T-cell (primary cell): ENCODE measurements at regions of chr19 and their contacts with region 1.

Region 1: GRCh38 chr19:16382775-16383543 is 58.3 kb downstream of the KLF2 start:
- DNase-seq: peak; percentile 59 to 90 (median 78)
- ATAC-seq: peak; percentile 69 to 80 (median 72)
- H3K4me3 ChIP-seq: peak overlapping the region in 1 of 2 donors; percentile 26
- H3K4me3 Mint-ChIP-seq: peak overlapping the region; percentile 58 to 69 (median 64)
- H3K27ac ChIP-seq: peak overlapping the region; percentile 69
- H3K27ac Mint-ChIP-seq: peak overlapping the region; percentile 92 to 95
- H3K4me1 ChIP-seq: peaks cover 26 to 79% of the 10 kb centered on the region in 2 experiments
- H3K4me1 Mint-ChIP-seq: peaks cover 64 to 66% (median 65%) of the 10 kb centered on the region in 3 donors
- H3K27me3 ChIP-seq: no peaks in the 10 kb centered on the region
- H3K27me3 Mint-ChIP-seq: no peaks in the 10 kb centered on the region

Region 2: DNA sequence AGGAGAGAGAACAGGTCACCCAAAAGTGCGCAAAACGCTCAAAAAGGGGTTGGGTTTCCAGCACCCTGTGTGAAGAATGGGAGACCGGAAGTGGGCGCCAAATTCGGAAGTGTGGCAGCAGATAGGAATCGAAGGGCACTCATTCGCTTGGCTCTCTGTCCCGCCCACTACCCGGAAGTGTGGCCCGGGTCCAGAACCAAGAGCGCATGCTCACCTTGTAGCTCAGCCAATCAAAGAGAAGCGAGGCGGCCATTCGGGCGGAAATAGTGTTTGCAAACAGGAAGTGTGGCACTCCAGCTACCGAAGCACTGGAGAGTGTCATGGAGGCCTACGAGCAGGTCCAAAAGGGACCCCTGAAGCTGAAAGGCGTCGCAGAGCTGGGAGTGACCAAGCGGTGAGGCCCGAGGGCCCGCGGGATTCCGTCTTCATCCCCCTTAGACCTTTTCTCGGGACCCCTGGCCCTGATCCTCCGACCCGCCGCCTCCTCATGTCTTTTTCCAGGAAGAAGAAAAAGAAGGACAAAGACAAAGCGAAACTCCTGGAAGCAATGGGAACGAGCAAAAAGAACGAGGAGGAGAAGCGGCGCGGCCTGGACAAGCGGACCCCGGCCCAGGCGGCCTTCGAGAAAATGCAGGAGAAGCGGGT is 197.7 kb before region 1 on chr19 and contains the start of gene FAM32A:
- CTCF ChIA-PET with region 1: interaction called in 1 of 2 experiments, 13 read pairs
- POLR2A ChIA-PET with region 1: no interaction called
- DNase-seq: peak; percentile 96 to 100 (median 98)
- ATAC-seq: peak; percentile 90 to 95 (median 92)
- H3K4me3 ChIP-seq: peak within 1 kb of the TSS; percentile 86 to 99
- H3K4me3 Mint-ChIP-seq: peak within 1 kb of the TSS; percentile 99 to 100 (median 100)
- H3K27ac ChIP-seq: peak within 1 kb of the TSS; percentile 47
- H3K27ac Mint-ChIP-seq: peak within 1 kb of the TSS; percentile 97 to 98
- H3K4me1 ChIP-seq: peaks cover 10 to 43% of the 10 kb centered on the region in 2 experiments
- H3K4me1 Mint-ChIP-seq: peaks cover 37 to 43% (median 41%) of the 10 kb centered on the region in 3 donors
- H3K27me3 ChIP-seq: peaks cover 0 to 6% of the 10 kb centered on the region in 2 experiments
- H3K27me3 Mint-ChIP-seq: peaks cover 0 to 1% of the 10 kb centered on the region in 2 donors
- total RNA-seq, gene FAM32A: 42.1 to 60.6 (median 53.3) TPM

Region 3: DNA sequence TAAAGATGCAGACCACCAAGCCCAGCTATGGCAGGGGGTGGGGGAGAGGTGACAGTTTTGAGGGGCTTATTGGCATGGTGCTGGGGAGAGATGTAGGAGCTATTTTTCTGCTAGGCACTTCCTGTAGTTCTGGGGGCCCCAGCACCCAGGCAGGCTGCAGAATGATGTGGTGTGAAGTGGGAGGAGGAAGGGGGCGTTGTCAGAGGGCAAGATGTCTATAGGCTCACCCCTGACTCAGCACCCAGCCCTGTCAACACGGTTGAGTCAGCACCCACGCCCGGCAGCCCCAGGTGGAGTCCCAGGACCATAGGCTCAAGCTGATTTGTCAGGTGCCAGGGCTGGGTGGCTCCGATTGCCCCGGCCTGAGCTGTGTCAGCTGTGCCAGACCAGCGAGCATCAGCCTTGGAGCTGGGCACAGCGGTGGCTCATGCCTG is 52.6 kb before region 1 on chr19:
- CTCF ChIA-PET with region 1: interaction called, 8 to 38 read pairs
- POLR2A ChIA-PET with region 1: interaction called, 17 to 102 read pairs
- DNase-seq: peak; percentile 88 to 97 (median 94)
- ATAC-seq: peak; percentile 55 to 76 (median 73)
- H3K4me3 ChIP-seq: peak overlapping the region in 1 of 2 donors; percentile 95
- H3K4me3 Mint-ChIP-seq: peak overlapping the region; percentile 98 to 100 (median 99)
- H3K27ac ChIP-seq: peak overlapping the region; percentile 82
- H3K27ac Mint-ChIP-seq: peak overlapping the region; percentile 95 to 98
- H3K4me1 ChIP-seq: peaks cover 18 to 70% of the 10 kb centered on the region in 2 experiments
- H3K4me1 Mint-ChIP-seq: peaks cover 50 to 63% (median 56%) of the 10 kb centered on the region in 3 donors
- H3K27me3 ChIP-seq: peaks cover 0 to 10% of the 10 kb centered on the region in 2 experiments
- H3K27me3 Mint-ChIP-seq: peaks cover 0 to 5% of the 10 kb centered on the region in 2 donors

Region 4: DNA sequence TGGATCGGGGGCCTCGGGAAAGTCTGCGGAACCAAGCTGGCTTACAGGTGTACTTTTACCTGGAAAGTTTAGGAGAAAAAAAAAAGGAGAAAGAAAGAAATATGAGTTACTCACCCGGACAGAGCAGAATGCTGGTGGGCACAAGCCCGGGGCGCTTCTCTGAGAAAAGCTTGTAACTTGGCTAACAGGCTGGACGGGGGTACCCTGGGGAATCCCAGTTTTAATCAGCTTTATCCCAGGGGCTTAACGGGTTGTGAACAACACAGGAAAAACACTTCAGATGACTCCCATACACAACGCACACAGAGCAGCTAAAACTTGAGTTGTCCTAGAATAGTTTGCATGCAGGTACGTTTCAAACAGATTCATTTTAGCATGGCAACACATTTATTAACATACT is 21.0 kb before region 1 on chr19:
- CTCF ChIA-PET with region 1: interaction called, 14 to 33 read pairs
- POLR2A ChIA-PET with region 1: interaction called, 7 to 19 read pairs
- DNase-seq: no peak
- ATAC-seq: no peak
- H3K4me3 ChIP-seq: no peak overlapping the region
- H3K4me3 Mint-ChIP-seq: peak overlapping the region in 1 of 3 donors; percentile 70
- H3K27ac ChIP-seq: peak overlapping the region; percentile 96
- H3K27ac Mint-ChIP-seq: peak overlapping the region; percentile 81 to 89
- H3K4me1 ChIP-seq: peaks cover 46 to 97% of the 10 kb centered on the region in 2 experiments
- H3K4me1 Mint-ChIP-seq: peaks cover 87 to 98% (median 91%) of the 10 kb centered on the region in 3 donors
- H3K27me3 ChIP-seq: no peaks in the 10 kb centered on the region
- H3K27me3 Mint-ChIP-seq: no peaks in the 10 kb centered on the region

Region 5: DNA sequence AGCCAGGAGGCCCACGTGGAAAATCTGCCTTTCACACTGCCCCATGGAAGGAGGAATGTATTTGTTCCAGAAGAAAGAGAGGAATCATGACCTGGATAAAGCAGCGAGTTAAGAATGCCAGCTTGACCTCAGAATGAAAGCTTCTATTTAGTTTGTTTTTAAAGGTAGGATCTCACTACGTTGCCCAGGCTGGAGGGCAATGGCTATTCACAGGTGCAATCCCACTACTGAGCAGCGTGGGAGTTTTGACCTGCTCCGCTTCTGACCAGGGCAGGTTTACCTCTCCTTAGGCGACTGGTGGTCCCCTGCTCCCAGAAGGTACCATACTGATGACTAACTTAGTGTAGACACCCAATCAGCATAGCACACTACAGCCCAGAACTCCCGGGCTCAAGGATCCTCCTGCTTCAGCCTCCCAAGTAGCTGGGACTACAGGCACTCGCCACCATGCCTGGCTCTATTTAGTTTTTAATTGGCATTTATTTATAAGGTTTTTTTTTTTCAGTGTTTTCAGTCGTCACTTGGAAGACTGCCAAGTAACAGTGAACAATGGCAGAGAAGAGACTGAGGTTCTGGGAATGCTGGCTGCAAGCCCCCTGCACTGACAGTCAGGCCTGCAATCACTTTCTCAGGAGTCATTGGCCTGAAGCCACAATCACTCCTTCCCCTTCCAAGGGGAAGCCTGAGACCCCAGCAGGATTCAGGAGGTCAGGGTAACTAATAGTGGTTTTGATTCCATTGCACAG is 15.7 kb after region 1 on chr19:
- CTCF ChIA-PET with region 1: interaction called in 1 of 2 experiments, 3 read pairs
- POLR2A ChIA-PET with region 1: interaction called in 1 of 2 experiments, 11 read pairs
- DNase-seq: no peak
- ATAC-seq: no peak
- H3K4me3 ChIP-seq: no peak overlapping the region
- H3K4me3 Mint-ChIP-seq: no peak overlapping the region
- H3K27ac ChIP-seq: peak overlapping the region; percentile 52
- H3K27ac Mint-ChIP-seq: peak overlapping the region; percentile 78 to 89
- H3K4me1 ChIP-seq: peaks cover 0 to 16% of the 10 kb centered on the region in 2 experiments
- H3K4me1 Mint-ChIP-seq: peaks cover 17 to 45% (median 31%) of the 10 kb centered on the region in 3 donors
- H3K27me3 ChIP-seq: no peaks in the 10 kb centered on the region
- H3K27me3 Mint-ChIP-seq: no peaks in the 10 kb centered on the region

Region 6: GRCh38 chr19:16482736-16483135 is 99.8 kb after region 1 on chr19:
- CTCF ChIA-PET with region 1: no interaction called
- POLR2A ChIA-PET with region 1: no interaction called
- DNase-seq: no peak
- ATAC-seq: no peak
- H3K4me3 ChIP-seq: no peak overlapping the region
- H3K4me3 Mint-ChIP-seq: no peak overlapping the region
- H3K27ac ChIP-seq: no peak overlapping the region
- H3K27ac Mint-ChIP-seq: no peak overlapping the region
- H3K4me1 ChIP-seq: no peaks in the 10 kb centered on the region
- H3K4me1 Mint-ChIP-seq: no peaks in the 10 kb centered on the region
- H3K27me3 ChIP-seq: peaks cover 0 to 3% of the 10 kb centered on the region in 2 experiments
- H3K27me3 Mint-ChIP-seq: peaks cover 0 to 1% of the 10 kb centered on the region in 2 donors

Region 7: GRCh38 chr19:16654140-16654539 is 271.2 kb after region 1 on chr19:
- CTCF ChIA-PET with region 1: no interaction called
- POLR2A ChIA-PET with region 1: no interaction called
- DNase-seq: no peak
- ATAC-seq: peak in 1 of 4 experiments; percentile 39
- H3K4me3 ChIP-seq: no peak overlapping the region
- H3K4me3 Mint-ChIP-seq: no peak overlapping the region
- H3K27ac ChIP-seq: no peak overlapping the region
- H3K27ac Mint-ChIP-seq: no peak overlapping the region
- H3K4me1 ChIP-seq: peaks cover 7 to 23% of the 10 kb centered on the region in 2 experiments
- H3K4me1 Mint-ChIP-seq: peaks cover 37 to 45% (median 38%) of the 10 kb centered on the region in 3 donors
- H3K27me3 ChIP-seq: no peaks in the 10 kb centered on the region
- H3K27me3 Mint-ChIP-seq: no peaks in the 10 kb centered on the region